Colonic mucosa (tissue), 4 donors: ENCODE measurements at regions of chr19 and their contacts with region 1.

Region 1: GRCh38 chr19:11137542-11138384 is 17.8 kb downstream of the SPC24 start:
- DNase-seq: peak; percentile 80
- H3K4me3 ChIP-seq: peak overlapping the region; percentile 10
- H3K27ac ChIP-seq: peak overlapping the region; percentile 68
- H3K4me1 ChIP-seq: peaks cover 9% of the 10 kb centered on the region
- H3K27me3 ChIP-seq: no peaks in the 10 kb centered on the region
- CTCF ChIP-seq: peak; percentile 72

Region 2: DNA sequence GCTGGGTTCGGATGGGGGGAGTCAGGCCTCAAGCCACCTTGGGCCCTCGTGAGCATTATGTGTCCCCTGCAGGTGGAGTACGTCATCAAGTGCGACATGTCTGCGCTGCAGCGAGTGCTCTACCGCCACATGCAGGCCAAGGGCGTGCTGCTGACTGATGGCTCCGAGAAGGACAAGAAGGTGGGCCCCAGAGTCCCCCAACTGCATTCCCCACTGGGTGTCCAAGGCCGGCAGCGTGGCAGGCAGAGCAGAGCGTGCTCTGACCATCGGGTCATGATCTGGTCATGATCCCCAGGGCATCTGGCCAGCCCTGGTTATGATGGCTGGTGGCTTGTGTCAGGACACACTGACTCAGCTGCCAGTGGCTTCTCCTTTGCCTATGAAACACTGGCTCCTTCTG is 113.5 kb before region 1 on chr19:
- intact Hi-C with region 1: no loop called
- DNase-seq: no peak
- H3K4me3 ChIP-seq: no peak overlapping the region
- H3K27ac ChIP-seq: no peak overlapping the region
- H3K4me1 ChIP-seq: no peaks in the 10 kb centered on the region
- H3K27me3 ChIP-seq: no peaks in the 10 kb centered on the region
- CTCF ChIP-seq: no peak

Region 3: DNA sequence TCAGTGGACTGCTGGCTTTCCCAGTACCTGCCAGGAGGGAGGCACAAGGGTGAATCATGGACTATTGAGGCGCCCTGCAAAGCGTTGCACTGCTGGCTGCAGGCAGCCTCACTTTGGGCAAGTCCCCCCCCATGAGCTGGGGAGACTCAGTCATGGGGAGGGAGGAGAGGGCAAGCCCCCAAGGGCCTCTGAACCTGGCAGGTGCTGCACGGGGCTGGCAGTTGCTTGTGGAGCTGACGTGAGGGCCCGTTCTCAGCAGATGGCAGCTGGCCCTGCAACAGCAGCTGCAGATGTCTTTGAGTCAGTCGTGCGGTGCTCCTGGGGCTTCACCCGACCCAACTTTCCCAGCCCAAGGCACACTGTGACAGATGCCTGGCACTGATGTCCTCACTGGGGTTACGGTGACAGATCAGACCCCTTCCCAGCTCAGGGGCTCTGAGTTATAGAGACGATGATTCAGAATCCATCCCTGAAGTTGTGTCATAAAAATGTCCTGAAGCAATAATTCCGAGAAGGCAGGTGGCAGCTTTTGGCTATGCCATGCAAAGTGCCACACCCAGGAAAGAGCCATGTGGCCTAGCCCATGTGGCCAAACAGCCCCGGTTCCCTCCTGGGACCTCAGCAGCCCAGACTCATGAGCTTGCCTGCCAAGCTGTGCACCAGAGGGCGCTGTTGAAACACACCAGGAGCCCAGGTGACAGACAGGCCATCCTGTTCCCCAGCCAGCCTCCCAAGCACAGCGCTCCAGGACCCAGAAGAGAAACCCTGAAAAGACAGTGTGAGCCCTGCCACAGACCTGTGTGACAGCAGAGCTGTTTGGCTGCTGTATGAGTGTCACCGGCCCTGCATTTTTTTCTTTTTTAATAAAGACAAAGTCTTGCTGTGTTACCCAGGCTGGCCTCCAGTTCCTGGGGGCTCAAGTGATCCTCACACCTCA is 102.1 kb before region 1 on chr19:
- intact Hi-C with region 1: no loop called
- DNase-seq: peak; percentile 97
- H3K4me3 ChIP-seq: no peak overlapping the region
- H3K27ac ChIP-seq: peak overlapping the region; percentile 27
- H3K4me1 ChIP-seq: peaks cover 5% of the 10 kb centered on the region
- H3K27me3 ChIP-seq: no peaks in the 10 kb centered on the region
- CTCF ChIP-seq: peak; percentile 84

Region 4: GRCh38 chr19:11203194-11204075 is 65.7 kb after region 1 on chr19:
- intact Hi-C with region 1: loop called (anchors 1 kb)
- DNase-seq: peak; percentile 75
- H3K4me3 ChIP-seq: no peak overlapping the region
- H3K27ac ChIP-seq: peak overlapping the region; percentile 60
- H3K4me1 ChIP-seq: no peaks in the 10 kb centered on the region
- H3K27me3 ChIP-seq: no peaks in the 10 kb centered on the region
- CTCF ChIP-seq: peak; percentile 74